ENCODE measurements at regions of chr5 and their contacts with region 1.

Region 1: GRCh38 chr5:52799983-52800393 is 12.3 kb downstream of the ITGA1 start:
- DNase-seq: peak; percentile 97 to 99
- ATAC-seq: peak; percentile 96
- H3K4me3 ChIP-seq: peak overlapping the region; percentile 90
- H3K27ac ChIP-seq: peak overlapping the region; percentile 58 to 81
- H3K4me1 ChIP-seq: peaks cover 4 to 6% of the 10 kb centered on the region in 2 donors
- H3K27me3 ChIP-seq: no peaks in the 10 kb centered on the region

Region 2: GRCh38 chr5:52359261-52359660 is 440.7 kb before region 1 on chr5:
- intact Hi-C with region 1: no loop called
- DNase-seq: no peak
- ATAC-seq: no peak
- H3K4me3 ChIP-seq: no peak overlapping the region
- H3K27ac ChIP-seq: no peak overlapping the region
- H3K4me1 ChIP-seq: no peaks in the 10 kb centered on the region
- H3K27me3 ChIP-seq: no peaks in the 10 kb centered on the region

Region 3: GRCh38 chr5:52603778-52604554 is 196.0 kb before region 1 on chr5:
- intact Hi-C with region 1: no loop called
- DNase-seq: no peak
- ATAC-seq: no peak
- H3K4me3 ChIP-seq: no peak overlapping the region
- H3K27ac ChIP-seq: no peak overlapping the region
- H3K4me1 ChIP-seq: no peaks in the 10 kb centered on the region
- H3K27me3 ChIP-seq: no peaks in the 10 kb centered on the region

Region 4: DNA sequence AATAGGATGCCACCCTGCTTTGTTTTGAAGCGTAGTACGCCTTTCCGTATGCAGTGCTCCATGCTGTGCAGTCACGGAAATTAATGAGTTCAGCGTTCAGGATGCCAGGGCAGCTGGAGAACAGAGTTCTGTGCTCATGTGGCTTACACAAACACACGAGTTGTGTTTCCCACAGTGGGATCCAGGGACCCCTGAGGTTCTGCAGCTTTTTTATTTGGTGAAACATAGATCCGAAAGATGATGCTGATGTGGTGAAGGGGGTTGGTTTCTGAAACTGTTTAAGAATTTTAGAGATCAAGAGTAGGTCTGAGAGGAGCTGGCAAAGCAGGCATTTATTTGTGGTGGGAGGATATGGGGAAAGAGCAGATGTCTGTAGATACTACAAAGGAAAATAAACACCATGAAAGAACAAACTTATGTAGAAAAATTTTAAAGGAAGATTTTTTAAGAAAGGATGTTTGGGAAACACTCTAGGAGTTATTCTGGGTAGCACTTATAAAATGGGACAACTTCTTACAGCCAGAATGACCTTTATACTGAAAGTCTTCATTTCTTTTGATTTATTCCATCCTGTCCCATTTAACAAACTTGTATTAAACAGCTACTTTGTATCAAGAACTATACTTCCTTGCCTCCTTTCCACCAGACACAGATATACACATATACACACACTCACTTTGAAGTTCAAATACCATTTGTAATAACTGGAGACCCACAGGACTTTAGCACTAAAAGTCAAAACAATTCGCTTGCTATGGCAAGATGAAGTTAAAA is 40.5 kb after region 1 on chr5:
- intact Hi-C with region 1: loop called in 1 of 2 experiments (anchors 5 kb)
- DNase-seq: no peak
- ATAC-seq: peak; percentile 56
- H3K4me3 ChIP-seq: peak overlapping the region in 1 of 2 donors; percentile 56
- H3K27ac ChIP-seq: peak overlapping the region; percentile 43 to 94
- H3K4me1 ChIP-seq: peaks cover 1 to 8% of the 10 kb centered on the region in 2 donors
- H3K27me3 ChIP-seq: no peaks in the 10 kb centered on the region